ENCODE measurements at regions of chr6 and their contacts with region 1.

Region 1: DNA sequence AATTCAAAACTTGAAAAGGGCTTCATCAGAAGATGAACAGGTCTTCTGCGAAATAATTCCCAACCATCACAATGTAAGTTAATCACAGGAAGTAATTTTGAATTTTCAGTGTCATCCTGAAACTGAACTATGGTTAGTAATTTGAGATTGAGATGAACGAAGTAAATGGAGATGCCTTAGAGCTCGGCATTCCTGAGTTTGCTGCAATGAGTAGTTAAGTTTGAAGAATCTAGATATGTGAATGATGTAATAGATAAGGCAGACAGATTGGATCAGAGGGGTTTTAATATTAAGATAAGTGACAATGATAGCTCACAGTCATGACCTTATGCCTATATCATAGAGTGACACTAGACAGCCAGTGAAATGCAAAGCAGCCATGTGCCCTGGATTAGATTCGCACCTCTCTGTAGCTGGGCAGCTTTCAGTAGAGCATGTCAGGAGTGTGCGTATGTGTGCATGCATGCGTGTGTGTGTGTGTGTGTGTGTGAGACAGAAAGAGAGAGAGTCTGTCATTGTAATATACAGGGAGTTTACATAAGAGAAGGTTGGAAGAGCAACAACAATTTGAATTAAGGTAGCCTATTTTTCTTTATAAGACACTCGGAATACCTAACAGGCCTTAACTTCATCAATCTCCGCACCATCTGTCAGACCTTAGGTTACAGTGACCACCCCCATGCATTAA is 233.0 kb downstream of the GMPR start:
- DNase-seq: no peak
- H3K4me3 Mint-ChIP-seq: peak overlapping the region; percentile 16
- H3K27ac Mint-ChIP-seq: peak overlapping the region; percentile 89
- H3K4me1 Mint-ChIP-seq: peaks cover 87% of the 10 kb centered on the region
- H3K27me3 Mint-ChIP-seq: no peaks in the 10 kb centered on the region

Region 2: GRCh38 chr6:16409531-16410441 is 61.6 kb before region 1 on chr6:
- CTCF ChIA-PET with region 1: interaction called, 9 read pairs
- POLR2A ChIA-PET with region 1: interaction called, 10 read pairs
- DNase-seq: peak; percentile 73
- H3K4me3 Mint-ChIP-seq: peak overlapping the region; percentile 63
- H3K27ac Mint-ChIP-seq: peak overlapping the region; percentile 73
- H3K4me1 Mint-ChIP-seq: peaks cover 65% of the 10 kb centered on the region
- H3K27me3 Mint-ChIP-seq: no peaks in the 10 kb centered on the region

Region 3: DNA sequence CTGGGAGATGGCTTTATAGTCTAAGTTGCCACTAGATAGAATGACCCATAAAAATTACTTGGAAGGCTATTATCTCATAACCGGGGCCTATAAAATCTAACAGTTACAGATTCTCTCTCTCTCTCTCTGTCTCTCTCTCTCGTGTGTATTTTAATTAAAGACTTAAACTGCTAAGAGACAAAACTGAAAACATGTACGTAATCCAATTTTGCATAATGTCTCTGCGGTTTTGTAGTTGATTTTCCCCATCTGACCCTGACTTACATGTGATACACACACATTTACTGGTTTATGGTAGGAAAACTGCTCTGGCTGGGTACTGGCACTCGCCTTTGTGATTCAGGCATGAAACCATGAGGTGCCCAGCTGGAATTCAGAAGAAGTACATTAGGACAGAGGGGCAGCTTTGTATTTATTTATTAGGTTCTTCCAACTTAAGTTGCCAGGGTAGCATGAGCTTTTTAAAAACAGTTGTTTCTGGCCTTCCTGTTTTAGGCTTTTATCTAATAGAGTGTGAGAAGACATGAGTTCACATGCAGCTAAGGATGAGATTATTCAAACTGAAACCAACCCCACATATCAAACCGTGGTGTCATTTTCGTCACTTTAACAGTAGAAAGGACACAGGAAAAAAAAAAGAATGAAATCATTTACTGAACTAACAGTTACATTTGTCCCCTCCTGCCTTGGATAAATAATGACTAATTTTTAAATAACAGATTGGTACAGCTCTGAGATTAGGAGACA is 50.5 kb before region 1 on chr6:
- CTCF ChIA-PET with region 1: no interaction called
- POLR2A ChIA-PET with region 1: interaction called, 14 read pairs
- DNase-seq: peak; percentile 49
- H3K4me3 Mint-ChIP-seq: peak overlapping the region; percentile 29
- H3K27ac Mint-ChIP-seq: peak overlapping the region; percentile 99
- H3K4me1 Mint-ChIP-seq: peaks cover 55% of the 10 kb centered on the region
- H3K27me3 Mint-ChIP-seq: no peaks in the 10 kb centered on the region

Region 4: GRCh38 chr6:16432075-16433032 is 39.0 kb before region 1 on chr6:
- CTCF ChIA-PET with region 1: interaction called, 4 read pairs
- POLR2A ChIA-PET with region 1: interaction called, 106 read pairs
- DNase-seq: no peak
- H3K4me3 Mint-ChIP-seq: no peak overlapping the region
- H3K27ac Mint-ChIP-seq: peak overlapping the region; percentile 27
- H3K4me1 Mint-ChIP-seq: peaks cover 69% of the 10 kb centered on the region
- H3K27me3 Mint-ChIP-seq: no peaks in the 10 kb centered on the region

Region 5: GRCh38 chr6:16446273-16446672 is 25.1 kb before region 1 on chr6:
- CTCF ChIA-PET with region 1: no interaction called
- POLR2A ChIA-PET with region 1: no interaction called
- DNase-seq: no peak
- H3K4me3 Mint-ChIP-seq: no peak overlapping the region
- H3K27ac Mint-ChIP-seq: no peak overlapping the region
- H3K4me1 Mint-ChIP-seq: peaks cover 28% of the 10 kb centered on the region
- H3K27me3 Mint-ChIP-seq: no peaks in the 10 kb centered on the region

Region 6: GRCh38 chr6:16481697-16482399 is 10.5 kb after region 1 on chr6:
- CTCF ChIA-PET with region 1: interaction called, 8 read pairs
- POLR2A ChIA-PET with region 1: interaction called, 28 read pairs
- DNase-seq: peak; percentile 80
- H3K4me3 Mint-ChIP-seq: peak overlapping the region; percentile 46
- H3K27ac Mint-ChIP-seq: peak overlapping the region; percentile 94
- H3K4me1 Mint-ChIP-seq: peaks cover 94% of the 10 kb centered on the region
- H3K27me3 Mint-ChIP-seq: no peaks in the 10 kb centered on the region

Region 7: DNA sequence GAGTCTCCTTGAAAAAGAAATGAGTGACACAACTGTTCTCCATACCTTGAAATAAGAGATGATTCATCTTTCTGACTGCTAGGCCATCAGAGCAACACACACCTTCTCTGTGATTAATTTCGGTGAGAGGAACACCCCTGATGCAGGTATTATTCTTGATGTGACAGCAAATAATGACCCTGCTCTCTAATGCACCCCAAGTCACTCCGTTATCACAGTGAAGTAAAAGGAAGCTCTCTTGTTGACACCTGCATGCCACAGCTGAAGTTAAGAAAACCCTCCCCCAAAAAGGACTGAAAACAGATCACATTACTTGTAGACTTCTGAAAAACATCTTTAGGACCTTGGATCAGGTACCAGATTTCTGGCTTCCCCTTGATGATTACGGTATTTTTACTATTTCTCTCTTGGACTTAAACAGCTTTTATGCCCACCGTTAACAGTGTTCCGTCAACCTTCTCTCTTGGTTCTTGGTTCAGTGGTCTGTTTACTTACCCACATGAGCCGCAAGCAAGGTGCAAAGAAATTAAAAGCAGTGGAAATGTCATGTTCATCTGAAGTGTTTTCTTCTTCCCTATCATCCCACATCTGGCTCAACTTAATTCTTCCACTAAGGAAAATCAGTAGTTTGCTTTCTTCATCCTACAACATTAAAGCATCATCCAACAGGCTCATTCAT is 16.8 kb after region 1 on chr6:
- CTCF ChIA-PET with region 1: interaction called, 4 read pairs
- POLR2A ChIA-PET with region 1: interaction called, 14 read pairs
- DNase-seq: no peak
- H3K4me3 Mint-ChIP-seq: peak overlapping the region; percentile 27
- H3K27ac Mint-ChIP-seq: peak overlapping the region; percentile 94
- H3K4me1 Mint-ChIP-seq: peaks cover 82% of the 10 kb centered on the region
- H3K27me3 Mint-ChIP-seq: no peaks in the 10 kb centered on the region